Activated B cell treated with CpG ODN at 0.5 μM for 24 hours (primary cell): ENCODE measurements at regions of chr14 and their contacts with region 1.

Region 1: DNA sequence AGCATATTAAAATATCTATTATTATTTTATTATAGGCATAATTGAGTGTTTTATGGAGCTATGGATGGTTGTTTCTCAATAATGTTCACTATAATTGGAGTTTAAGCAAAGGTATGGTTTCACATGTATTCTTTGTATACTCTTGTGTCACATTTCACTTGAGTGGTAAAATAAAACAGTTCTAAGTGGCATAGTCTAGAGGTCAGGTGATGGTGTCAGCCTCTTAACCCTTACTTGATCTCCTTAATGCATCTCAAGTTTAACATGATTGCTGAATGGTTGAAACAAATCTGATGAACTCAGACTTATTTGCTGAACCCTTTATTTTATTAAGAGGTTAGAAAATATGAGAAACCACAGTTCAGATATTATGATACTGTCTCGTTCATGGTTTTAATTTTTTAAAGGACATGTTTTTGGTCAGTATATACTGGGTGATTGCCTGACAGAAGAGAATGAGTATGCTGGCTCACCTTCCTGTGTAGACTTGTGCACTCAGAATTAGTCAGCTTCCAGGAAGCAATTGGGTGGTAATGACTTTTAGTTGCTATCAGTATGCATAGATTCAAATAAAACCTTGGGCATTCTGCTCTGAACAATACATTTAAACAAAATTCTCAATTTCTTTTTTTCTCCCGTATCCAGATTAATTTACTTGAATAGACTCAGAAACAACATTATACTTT is 464.6 kb downstream of the PCNX1 start:
- DNase-seq: no peak
- ATAC-seq: peak; percentile 72
- H3K4me3 Mint-ChIP-seq: peak overlapping the region; percentile 0
- H3K27ac Mint-ChIP-seq: no peak overlapping the region
- H3K4me1 Mint-ChIP-seq: peaks cover 42% of the 10 kb centered on the region
- H3K27me3 Mint-ChIP-seq: no peaks in the 10 kb centered on the region
- CTCF ChIP-seq: no peak

Region 2: GRCh38 chr14:71138448-71139293 is 233.2 kb before region 1 on chr14:
- CTCF ChIA-PET with region 1: no interaction called
- POLR2A ChIA-PET with region 1: no interaction called
- intact Hi-C with region 1: no loop called
- DNase-seq: peak; percentile 42
- ATAC-seq: peak; percentile 84
- H3K4me3 Mint-ChIP-seq: no peak overlapping the region
- H3K27ac Mint-ChIP-seq: no peak overlapping the region
- H3K4me1 Mint-ChIP-seq: peaks cover 28% of the 10 kb centered on the region
- H3K27me3 Mint-ChIP-seq: no peaks in the 10 kb centered on the region
- CTCF ChIP-seq: peak; percentile 64

Region 3: DNA sequence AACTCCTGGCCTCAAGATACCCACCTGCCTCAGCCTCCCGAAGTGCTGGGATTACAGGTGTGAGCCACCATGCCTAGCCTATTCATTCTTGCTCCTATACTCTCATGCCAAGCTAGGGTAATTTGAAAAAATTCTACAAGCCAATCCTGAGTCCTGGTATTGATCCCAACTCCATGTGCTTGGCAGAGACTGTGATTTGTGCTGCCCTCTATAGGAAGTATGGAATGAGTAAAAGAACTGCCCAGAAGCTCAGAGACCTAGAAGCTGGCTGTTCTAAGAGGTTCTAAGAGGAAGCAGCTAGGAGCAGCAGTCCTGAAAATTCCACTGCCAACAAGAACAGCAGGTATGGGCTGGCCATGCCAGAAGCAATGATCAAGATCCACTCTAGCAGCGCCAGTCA is 62.1 kb before region 1 on chr14:
- CTCF ChIA-PET with region 1: no interaction called
- POLR2A ChIA-PET with region 1: no interaction called
- intact Hi-C with region 1: no loop called
- DNase-seq: no peak
- ATAC-seq: no peak
- H3K4me3 Mint-ChIP-seq: no peak overlapping the region
- H3K27ac Mint-ChIP-seq: no peak overlapping the region
- H3K4me1 Mint-ChIP-seq: peaks cover 12% of the 10 kb centered on the region
- H3K27me3 Mint-ChIP-seq: peaks cover 10% of the 10 kb centered on the region
- CTCF ChIP-seq: no peak

Region 4: DNA sequence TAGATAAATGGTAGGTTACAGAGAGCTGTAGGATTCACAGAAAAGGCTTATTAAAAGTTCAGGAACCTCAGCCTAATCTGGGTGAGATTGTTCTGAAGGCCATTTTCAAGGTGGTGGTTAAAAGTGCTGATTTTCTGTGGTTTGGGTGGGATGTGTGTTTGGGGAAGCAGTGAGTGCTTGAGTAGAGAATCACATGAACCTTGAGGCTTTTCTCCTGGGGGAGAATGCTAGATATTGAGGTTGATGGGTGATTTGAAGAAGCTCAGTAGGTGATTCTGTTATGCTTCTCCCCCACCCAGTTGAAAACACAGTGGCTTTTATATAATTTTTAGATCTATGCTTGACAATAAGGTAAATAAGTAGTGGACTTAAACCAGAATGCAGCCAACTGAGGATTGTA is 43.7 kb before region 1 on chr14:
- CTCF ChIA-PET with region 1: no interaction called
- POLR2A ChIA-PET with region 1: no interaction called
- intact Hi-C with region 1: no loop called
- DNase-seq: no peak
- ATAC-seq: peak; percentile 16
- H3K4me3 Mint-ChIP-seq: no peak overlapping the region
- H3K27ac Mint-ChIP-seq: peak overlapping the region; percentile 12
- H3K4me1 Mint-ChIP-seq: peaks cover 89% of the 10 kb centered on the region
- H3K27me3 Mint-ChIP-seq: no peaks in the 10 kb centered on the region
- CTCF ChIP-seq: no peak

Region 5: GRCh38 chr14:71388862-71389261 is 17.0 kb after region 1 on chr14:
- CTCF ChIA-PET with region 1: no interaction called
- POLR2A ChIA-PET with region 1: interaction called, 4 read pairs
- intact Hi-C with region 1: loop called (anchors 2 kb)
- DNase-seq: no peak
- ATAC-seq: no peak
- H3K4me3 Mint-ChIP-seq: no peak overlapping the region
- H3K27ac Mint-ChIP-seq: peak overlapping the region; percentile 46
- H3K4me1 Mint-ChIP-seq: peaks cover 77% of the 10 kb centered on the region
- H3K27me3 Mint-ChIP-seq: no peaks in the 10 kb centered on the region
- CTCF ChIP-seq: no peak

Region 6: GRCh38 chr14:71610149-71610548 is 238.3 kb after region 1 on chr14:
- CTCF ChIA-PET with region 1: no interaction called
- POLR2A ChIA-PET with region 1: no interaction called
- intact Hi-C with region 1: no loop called
- DNase-seq: no peak
- ATAC-seq: no peak
- H3K4me3 Mint-ChIP-seq: no peak overlapping the region
- H3K27ac Mint-ChIP-seq: no peak overlapping the region
- H3K4me1 Mint-ChIP-seq: peaks cover 38% of the 10 kb centered on the region
- H3K27me3 Mint-ChIP-seq: no peaks in the 10 kb centered on the region
- CTCF ChIP-seq: no peak